OCI-LY7 (cell line): ENCODE measurements at regions of chr3 and their contacts with region 1.

Region 1: DNA sequence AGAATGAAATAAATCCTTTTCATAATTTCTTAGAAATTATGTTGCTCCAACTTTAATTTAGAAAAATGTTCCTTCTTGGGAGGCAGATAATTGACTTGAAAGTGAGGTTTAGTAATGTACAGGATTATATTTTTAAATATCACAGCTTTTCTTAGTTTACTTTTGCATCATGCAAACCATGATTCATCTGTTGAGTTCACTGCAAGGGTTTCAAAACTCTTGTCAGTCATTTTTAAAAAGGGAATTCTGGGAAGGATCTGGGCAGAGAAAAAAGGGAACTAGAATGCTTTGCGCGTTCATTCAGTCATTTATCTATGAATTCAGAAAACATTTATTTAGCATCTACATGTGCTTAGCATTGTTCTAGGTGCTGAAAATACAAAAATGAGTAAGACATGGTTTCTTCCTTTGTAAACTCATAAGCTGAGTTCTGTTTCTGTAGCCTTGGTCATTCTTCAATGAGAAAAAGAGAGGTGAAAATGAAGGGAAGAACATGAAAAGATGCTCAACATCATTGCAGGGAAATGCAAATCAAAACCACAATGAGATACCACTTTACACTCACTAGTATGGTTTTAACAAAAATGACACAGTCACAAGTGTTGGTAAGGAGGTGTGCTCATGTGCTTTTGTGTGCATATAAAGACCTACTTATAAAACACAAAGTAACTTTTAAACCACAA is 209.1 kb downstream of the NR1D2 start:
- DNase-seq: no peak
- H3K4me3 ChIP-seq: no peak overlapping the region
- H3K27ac ChIP-seq: no peak overlapping the region
- H3K4me1 ChIP-seq: no peaks in the 10 kb centered on the region
- CTCF ChIP-seq: no peak

Region 2: GRCh38 chr3:24101676-24102168 is 52.4 kb before region 1 on chr3:
- CTCF ChIA-PET with region 1: no interaction called
- POLR2A ChIA-PET with region 1: no interaction called
- intact Hi-C with region 1: no loop called
- DNase-seq: no peak
- H3K4me3 ChIP-seq: no peak overlapping the region
- H3K27ac ChIP-seq: no peak overlapping the region
- H3K4me1 ChIP-seq: no peaks in the 10 kb centered on the region
- CTCF ChIP-seq: no peak

Region 3: GRCh38 chr3:24168977-24169376 is 14.8 kb after region 1 on chr3:
- CTCF ChIA-PET with region 1: interaction called, 3 read pairs
- POLR2A ChIA-PET with region 1: interaction called, 13 read pairs
- intact Hi-C with region 1: no loop called
- DNase-seq: no peak
- H3K4me3 ChIP-seq: no peak overlapping the region
- H3K27ac ChIP-seq: no peak overlapping the region
- H3K4me1 ChIP-seq: no peaks in the 10 kb centered on the region
- CTCF ChIP-seq: no peak